AG04449 (cell line): ENCODE measurements at regions of chr1 and their contacts with region 1.

Region 1: GRCh38 chr1:226308723-226309315 is at the start of gene LIN9:
- DNase-seq: peak; percentile 33
- H3K4me3 ChIP-seq: peak within 1 kb of the TSS; percentile 95
- CTCF ChIP-seq: peak; percentile 4

Region 2: DNA sequence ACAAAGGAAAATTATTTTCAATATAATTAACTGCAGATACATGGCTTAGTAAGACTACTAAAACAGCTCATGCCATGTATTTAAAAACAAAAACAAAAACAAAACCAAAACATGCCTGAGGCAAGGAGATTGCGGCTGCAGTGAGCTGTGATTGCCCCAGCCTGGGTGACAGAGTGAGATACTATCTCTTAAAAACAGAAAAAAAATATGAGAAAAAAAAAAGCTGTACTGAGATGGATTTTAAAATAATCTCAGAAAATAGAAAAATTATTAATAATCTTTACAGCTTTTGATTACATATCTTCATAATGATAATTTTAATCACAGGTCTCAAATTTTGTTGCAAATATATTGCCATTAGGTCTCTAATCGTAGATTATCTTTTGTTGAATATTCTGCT is 24.1 kb after region 1 on chr1:
- CTCF ChIA-PET with region 1: interaction called, 10 read pairs
- POLR2A ChIA-PET with region 1: no interaction called
- DNase-seq: no peak
- H3K4me3 ChIP-seq: no peak overlapping the region
- CTCF ChIP-seq: no peak

Region 3: GRCh38 chr1:226370144-226370923 is 61.5 kb after region 1 on chr1:
- CTCF ChIA-PET with region 1: no interaction called
- POLR2A ChIA-PET with region 1: no interaction called
- DNase-seq: no peak
- H3K4me3 ChIP-seq: no peak overlapping the region
- CTCF ChIP-seq: no peak